ENCODE measurements at regions of chrX and their contacts with region 1.

Region 1: GRCh38 chrX:149938427-149939270 is at the start of gene EOLA2:
- DNase-seq: peak; percentile 98
- ATAC-seq: peak; percentile 68
- H3K4me3 ChIP-seq: peak within 1 kb of the TSS; percentile 90
- H3K27ac ChIP-seq: peak within 1 kb of the TSS; percentile 95
- H3K4me1 ChIP-seq: peaks cover 4% of the 10 kb centered on the region; the same call in 1 of the 2 replicates
- H3K27me3 ChIP-seq: no peaks in the 10 kb centered on the region
- CTCF ChIP-seq: peak; percentile 56
- total RNA-seq, gene EOLA2: 35.7 and 49.8 TPM in 2 replicates

Region 2: GRCh38 chrX:149611623-149612175 is 326.9 kb before region 1 on chrX:
- CTCF ChIA-PET with region 1: no interaction called
- POLR2A ChIA-PET with region 1: no interaction called
- intact Hi-C with region 1: no loop called
- DNase-seq: no peak
- ATAC-seq: no peak
- H3K4me3 ChIP-seq: no peak overlapping the region
- H3K27ac ChIP-seq: no peak overlapping the region
- H3K4me1 ChIP-seq: no peaks in the 10 kb centered on the region
- H3K27me3 ChIP-seq: no peaks in the 10 kb centered on the region
- CTCF ChIP-seq: no peak

Region 3: DNA sequence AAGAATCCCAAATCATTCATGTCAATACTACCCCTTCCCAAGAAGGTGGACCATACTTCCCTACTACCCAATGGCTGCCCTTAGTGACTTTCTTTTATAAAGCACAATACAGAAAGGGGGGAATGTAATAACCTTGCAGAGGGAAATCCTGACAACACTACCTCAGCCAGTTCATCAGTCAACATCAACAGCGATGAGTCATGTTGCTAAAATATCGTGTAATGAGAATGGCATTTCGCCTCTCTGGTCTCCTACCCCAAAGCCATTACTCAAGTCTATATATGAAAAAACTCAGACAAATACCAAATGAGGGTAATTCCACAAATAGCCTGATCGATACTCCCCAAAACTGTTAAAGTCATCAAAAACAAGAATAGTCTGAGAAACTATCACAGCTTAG is 61.0 kb before region 1 on chrX:
- CTCF ChIA-PET with region 1: interaction called, 8 read pairs
- POLR2A ChIA-PET with region 1: interaction called, 14 read pairs
- intact Hi-C with region 1: no loop called
- DNase-seq: peak; percentile 85
- ATAC-seq: peak; percentile 89
- H3K4me3 ChIP-seq: peak overlapping the region; percentile 34
- H3K27ac ChIP-seq: peak overlapping the region; percentile 53
- H3K4me1 ChIP-seq: peaks cover 29% of the 10 kb centered on the region
- H3K27me3 ChIP-seq: no peaks in the 10 kb centered on the region
- CTCF ChIP-seq: no peak

Region 4: GRCh38 chrX:149962859-149963757 is 24.5 kb after region 1 on chrX:
- CTCF ChIA-PET with region 1: no interaction called
- POLR2A ChIA-PET with region 1: no interaction called
- intact Hi-C with region 1: no loop called
- DNase-seq: peak; percentile 77
- ATAC-seq: peak; percentile 96
- H3K4me3 ChIP-seq: no peak overlapping the region
- H3K27ac ChIP-seq: no peak overlapping the region
- H3K4me1 ChIP-seq: 0 out of 2 replicates have a peak, but pooled peaks cover 6% of the 10 kb centered on the region
- H3K27me3 ChIP-seq: no peaks in the 10 kb centered on the region
- CTCF ChIP-seq: peak; percentile 88

Region 5: DNA sequence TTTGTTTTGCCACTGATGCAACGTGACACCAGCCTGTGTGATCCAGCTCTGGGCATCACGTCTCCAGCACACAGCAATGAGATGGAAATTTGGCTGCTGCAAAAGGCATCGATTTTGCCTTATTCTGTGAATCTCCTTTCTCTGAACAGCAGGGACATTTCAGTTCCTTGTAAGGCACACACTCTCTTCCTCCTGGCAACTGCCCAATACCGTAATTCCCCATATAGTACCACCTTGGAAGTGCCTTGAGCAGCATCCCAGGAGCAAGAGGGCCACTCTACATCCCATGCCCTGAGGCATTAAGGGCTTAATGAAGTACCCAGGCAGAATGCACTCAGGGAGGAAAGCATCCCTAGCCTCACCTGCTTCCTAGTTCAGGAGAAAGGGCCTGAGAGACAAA is 413.9 kb after region 1 on chrX:
- CTCF ChIA-PET with region 1: no interaction called
- POLR2A ChIA-PET with region 1: no interaction called
- intact Hi-C with region 1: no loop called
- DNase-seq: peak; percentile 20
- ATAC-seq: no peak; the same call in 1 of the 2 replicates
- H3K4me3 ChIP-seq: no peak overlapping the region
- H3K27ac ChIP-seq: no peak overlapping the region
- H3K4me1 ChIP-seq: peaks cover 8% of the 10 kb centered on the region
- H3K27me3 ChIP-seq: no peaks in the 10 kb centered on the region
- CTCF ChIP-seq: no peak